Transverse colon (tissue), 4 donors: ENCODE measurements at regions of chr22 and their contacts with region 1.

Region 1: DNA sequence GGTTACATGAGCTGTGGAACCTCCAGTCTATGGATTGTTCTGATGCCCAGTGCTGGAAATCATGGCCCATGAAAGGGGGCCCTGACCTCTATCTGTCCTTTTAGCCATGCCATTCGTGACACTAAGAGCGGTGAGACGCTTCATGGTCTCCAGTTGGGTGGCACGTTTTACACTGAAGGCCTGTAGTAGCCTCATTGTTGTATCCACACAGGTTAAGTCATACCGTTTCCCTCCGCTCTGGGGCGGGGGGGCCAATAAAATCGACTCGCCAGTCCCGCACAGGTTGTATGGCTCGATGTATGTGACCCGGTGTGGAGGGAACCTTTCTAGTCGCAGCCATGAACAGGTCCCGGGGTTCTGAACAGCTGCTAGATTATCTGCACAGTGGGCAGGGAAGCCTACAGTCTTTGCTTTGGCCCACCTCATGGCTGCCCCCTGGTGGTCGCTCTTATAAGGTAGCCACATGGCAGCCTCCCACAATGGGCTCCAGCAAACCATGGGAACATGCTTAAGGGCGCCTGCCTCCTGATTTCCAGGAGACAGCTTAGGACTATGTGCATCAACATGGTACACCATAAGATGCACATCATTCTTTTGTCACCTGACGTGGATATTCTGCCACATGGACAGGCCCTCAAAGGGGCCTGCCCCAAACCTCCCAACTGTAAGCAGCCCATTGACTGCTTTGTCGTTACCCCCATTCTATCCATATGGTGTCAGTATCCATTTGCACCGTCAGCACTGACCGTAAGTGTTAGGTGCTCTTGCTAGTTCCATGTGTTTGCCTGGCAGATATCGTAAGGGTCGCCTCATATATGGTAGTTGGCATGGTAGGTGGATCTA is 19.7 kb upstream of the APOL3 start:
- DNase-seq: peak; percentile 87
- H3K4me3 ChIP-seq: no peak overlapping the region
- H3K27ac ChIP-seq: no peak overlapping the region
- H3K4me1 ChIP-seq: no peaks in the 10 kb centered on the region
- H3K27me3 ChIP-seq: no peaks in the 10 kb centered on the region
- CTCF ChIP-seq: peak; percentile 79 to 91 (median 90)
- EP300 ChIP-seq: no peak
- POLR2A ChIP-seq: no peak

Region 2: GRCh38 chr22:36221799-36222751 is 41.8 kb after region 1 on chr22:
- in situ Hi-C with region 1: no loop called
- intact Hi-C with region 1: no loop called
- DNase-seq: peak; percentile 59
- H3K4me3 ChIP-seq: no peak overlapping the region
- H3K27ac ChIP-seq: no peak overlapping the region
- H3K4me1 ChIP-seq: peaks cover 0 to 15% (median 0%) of the 10 kb centered on the region in 4 donors
- H3K27me3 ChIP-seq: no peaks in the 10 kb centered on the region
- CTCF ChIP-seq: peak; percentile 45 to 58 (median 53)
- EP300 ChIP-seq: no peak
- POLR2A ChIP-seq: no peak

Region 3: GRCh38 chr22:36481393-36482168 is 301.3 kb after region 1 on chr22 and contains the start of gene TXN2:
- in situ Hi-C with region 1: loop called in 2 of 4 experiments (anchors 25 kb)
- intact Hi-C with region 1: no loop called
- DNase-seq: peak; percentile 97
- H3K4me3 ChIP-seq: peak within 1 kb of the TSS; percentile 60 to 80 (median 70)
- H3K27ac ChIP-seq: peak within 1 kb of the TSS; percentile 99 to 100 (median 100)
- H3K4me1 ChIP-seq: peaks cover 6 to 15% (median 10%) of the 10 kb centered on the region in 4 donors
- H3K27me3 ChIP-seq: no peaks in the 10 kb centered on the region
- CTCF ChIP-seq: peak in 2 of 5 experiments; percentile 4 to 10
- EP300 ChIP-seq: no peak
- POLR2A ChIP-seq: peak; percentile 91
- total RNA-seq, gene TXN2: 68.5 to 317 (median 93.3) TPM